Activated CD4-positive, alpha-beta T cell treated with anti-CD3 and anti-CD28 coated beads for 36 hours (primary cell): ENCODE measurements at regions of chr13 and their contacts with region 1.

Region 1: GRCh38 chr13:46593398-46593797 is 40.4 kb downstream of the LRCH1 start:
- DNase-seq: peak; percentile 79
- ATAC-seq: peak; percentile 96
- H3K4me3 Mint-ChIP-seq: peak overlapping the region; percentile 15
- H3K27ac Mint-ChIP-seq: peak overlapping the region; percentile 47
- H3K4me1 Mint-ChIP-seq: peaks cover 73% of the 10 kb centered on the region
- H3K27me3 Mint-ChIP-seq: no peaks in the 10 kb centered on the region

Region 2: GRCh38 chr13:46577696-46578589 is 15.5 kb before region 1 on chr13:
- CTCF ChIA-PET with region 1: interaction called, 5 read pairs
- POLR2A ChIA-PET with region 1: interaction called, 3 read pairs
- intact Hi-C with region 1: loop called in 1 of 2 experiments (anchors 2 kb)
- DNase-seq: no peak
- ATAC-seq: peak; percentile 33
- H3K4me3 Mint-ChIP-seq: no peak overlapping the region
- H3K27ac Mint-ChIP-seq: peak overlapping the region; percentile 47
- H3K4me1 Mint-ChIP-seq: peaks cover 70% of the 10 kb centered on the region
- H3K27me3 Mint-ChIP-seq: no peaks in the 10 kb centered on the region